ENCODE measurements at regions of chr15 and their contacts with region 1.

Region 1: GRCh38 chr15:78162038-78162437 is 12.9 kb downstream of the IDH3A start:
- DNase-seq: no peak
- H3K4me3 ChIP-seq: no peak overlapping the region
- H3K27me3 ChIP-seq: no peaks in the 10 kb centered on the region
- CTCF ChIP-seq: no peak

Region 2: GRCh38 chr15:77907824-77908751 is 253.9 kb before region 1 on chr15:
- CTCF ChIA-PET with region 1: no interaction called
- POLR2A ChIA-PET with region 1: no interaction called
- DNase-seq: no peak
- H3K4me3 ChIP-seq: no peak overlapping the region
- H3K27me3 ChIP-seq: no peaks in the 10 kb centered on the region; the same call in 1 of the 2 replicates
- CTCF ChIP-seq: peak; percentile 75

Region 3: GRCh38 chr15:78139578-78139977 is 22.5 kb before region 1 on chr15:
- CTCF ChIA-PET with region 1: no interaction called
- POLR2A ChIA-PET with region 1: no interaction called
- DNase-seq: no peak
- H3K4me3 ChIP-seq: no peak overlapping the region
- H3K27me3 ChIP-seq: no peaks in the 10 kb centered on the region
- CTCF ChIP-seq: no peak

Region 4: GRCh38 chr15:78177447-78177873 is 15.4 kb after region 1 on chr15:
- CTCF ChIA-PET with region 1: interaction called, 10 read pairs
- POLR2A ChIA-PET with region 1: no interaction called
- DNase-seq: no peak
- H3K4me3 ChIP-seq: no peak overlapping the region
- H3K27me3 ChIP-seq: peaks cover 1% of the 10 kb centered on the region; the same call in 1 of the 2 replicates
- CTCF ChIP-seq: peak; percentile 84

Measured in BJ (cell line).